Sciatic nerve (tissue), 2 donors: ENCODE measurements at regions of chr15 and their contacts with region 1.

Region 1: GRCh38 chr15:73639464-73640188 is 6.4 kb upstream of the NPTN start:
- DNase-seq: no peak
- ATAC-seq: no peak

Region 2: DNA sequence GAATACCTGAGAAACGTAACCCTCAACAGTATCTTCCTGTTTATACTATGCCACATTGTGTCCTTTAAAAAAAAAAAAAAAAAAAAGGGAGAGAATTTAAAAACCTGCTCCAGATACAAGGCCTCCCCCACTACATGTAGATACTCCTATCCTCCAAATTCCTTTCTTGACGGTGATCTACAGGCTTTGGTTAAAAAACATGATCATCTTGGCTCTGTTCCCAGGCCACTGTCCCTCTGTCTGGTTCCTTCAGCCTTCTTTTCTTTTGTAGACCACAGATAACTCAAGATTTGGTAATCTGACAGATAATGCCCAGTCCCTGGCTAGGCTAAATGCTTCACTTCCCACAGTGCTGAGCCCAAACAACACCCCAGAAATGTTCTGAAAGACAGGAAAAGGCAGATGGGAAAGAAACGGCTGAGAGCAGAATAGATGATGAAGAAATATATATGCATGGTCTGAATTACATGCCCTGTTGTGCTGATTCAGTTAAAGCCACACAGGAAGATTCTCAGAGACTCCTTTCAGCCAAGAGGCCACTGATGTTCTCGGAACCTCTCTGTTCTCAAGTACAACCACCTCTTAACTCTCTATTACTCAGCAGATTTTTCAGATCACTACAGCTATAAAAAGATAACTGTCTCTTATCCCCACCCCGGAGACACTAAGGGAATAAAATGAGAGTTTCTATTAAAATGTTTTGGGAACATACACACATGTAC is 54.8 kb before region 1 on chr15:
- intact Hi-C with region 1: no loop called
- DNase-seq: no peak
- ATAC-seq: no peak

Region 3: GRCh38 chr15:73697033-73697467 is 57.4 kb after region 1 on chr15:
- intact Hi-C with region 1: loop called (anchors 2 kb)
- DNase-seq: peak; percentile 89
- ATAC-seq: peak; percentile 97